A673 (cell line): ENCODE measurements at regions of chr2 and their contacts with region 1.

Region 1: DNA sequence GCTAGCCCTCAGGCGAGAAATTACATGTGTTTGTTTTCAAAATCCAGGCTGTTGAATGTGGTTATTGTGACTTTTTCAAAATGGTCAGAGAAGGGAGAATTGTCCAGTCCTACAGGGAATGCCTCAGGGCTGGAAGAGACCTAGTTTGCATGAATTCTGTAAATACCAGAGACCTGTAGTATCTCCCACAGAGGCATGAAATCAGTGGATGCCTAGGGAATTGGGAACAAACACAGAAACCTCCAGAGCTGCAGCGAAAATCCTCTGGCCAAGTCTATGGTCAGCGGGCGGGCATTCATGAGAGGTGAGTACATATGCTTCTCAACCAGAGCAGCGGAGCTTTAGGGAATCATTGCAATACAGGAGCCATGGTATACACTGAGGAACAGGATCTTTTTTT is 1596.5 kb upstream of the NXPH2 start:
- DNase-seq: no peak
- H3K4me3 ChIP-seq: no peak overlapping the region
- H3K27ac ChIP-seq: no peak overlapping the region
- H3K4me1 ChIP-seq: no peaks in the 10 kb centered on the region
- H3K27me3 ChIP-seq: no peaks in the 10 kb centered on the region
- CTCF ChIP-seq: no peak

Region 2: DNA sequence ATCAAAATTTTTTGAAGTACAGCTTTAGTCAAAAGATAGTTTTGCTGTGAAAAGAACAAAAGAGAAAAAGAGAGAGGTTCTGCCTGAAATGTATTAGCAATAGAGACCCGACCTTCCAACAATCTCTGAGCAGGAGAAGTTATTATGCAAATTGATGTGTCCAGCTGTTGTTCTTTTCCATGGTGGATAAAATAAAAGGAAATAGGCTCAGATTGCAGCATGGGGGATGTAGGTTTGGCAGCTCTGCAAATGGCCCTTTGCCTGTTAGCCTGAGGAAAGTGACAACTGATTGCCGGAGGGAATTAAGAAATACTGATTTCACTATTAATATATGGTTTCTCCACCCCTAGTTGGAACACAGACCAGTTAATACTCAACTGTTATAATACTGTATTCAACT is 313.3 kb before region 1 on chr2:
- CTCF ChIA-PET with region 1: no interaction called
- POLR2A ChIA-PET with region 1: no interaction called
- intact Hi-C with region 1: no loop called
- DNase-seq: peak; percentile 79
- H3K4me3 ChIP-seq: no peak overlapping the region
- H3K27ac ChIP-seq: peak overlapping the region; percentile 15
- H3K4me1 ChIP-seq: peaks cover 5% of the 10 kb centered on the region
- H3K27me3 ChIP-seq: no peaks in the 10 kb centered on the region
- CTCF ChIP-seq: no peak

Region 3: DNA sequence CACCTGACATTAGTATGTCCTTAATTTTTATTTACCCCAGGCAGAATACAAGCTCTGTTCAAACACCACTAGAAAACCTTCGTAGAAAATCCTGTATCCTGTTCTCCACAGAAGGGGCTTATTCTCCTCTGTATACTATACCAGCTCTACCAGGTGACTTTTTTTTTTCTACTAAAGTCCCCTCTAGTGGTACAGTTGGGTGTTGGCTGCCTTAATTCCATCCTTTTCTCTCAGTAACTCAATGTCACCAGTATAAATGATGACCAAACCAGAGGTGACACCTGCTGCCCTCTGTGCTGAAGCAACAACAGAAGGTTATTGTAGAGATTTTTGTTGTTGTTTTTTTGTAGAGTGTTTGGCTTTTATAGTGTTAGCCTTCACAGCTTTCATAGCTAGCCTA is 432.1 kb after region 1 on chr2:
- CTCF ChIA-PET with region 1: interaction called, 10 read pairs
- POLR2A ChIA-PET with region 1: no interaction called
- intact Hi-C with region 1: no loop called
- DNase-seq: peak; percentile 35
- H3K4me3 ChIP-seq: no peak overlapping the region
- H3K27ac ChIP-seq: no peak overlapping the region
- H3K4me1 ChIP-seq: peaks cover 3% of the 10 kb centered on the region
- H3K27me3 ChIP-seq: no peaks in the 10 kb centered on the region
- CTCF ChIP-seq: peak; percentile 46; the same call in 1 of the 2 replicates